ENCODE measurements at regions of chr4 and their contacts with region 1.

Region 1: GRCh38 chr4:140935254-140935653 is 179.1 kb upstream of the TBC1D9 start:
- DNase-seq: peak in 1 of 2 donors; percentile 50
- ATAC-seq: peak; percentile 43 to 85 (median 74)
- H3K4me3 ChIP-seq: no peak overlapping the region
- H3K27ac ChIP-seq: peak overlapping the region in 8 of 10 donors; percentile 1 to 66 (median 38)
- H3K4me1 ChIP-seq: peaks cover 0 to 61% (median 28%) of the 10 kb centered on the region in 9 donors
- H3K27me3 ChIP-seq: no peaks in the 10 kb centered on the region
- CTCF ChIP-seq: no peak

Region 2: DNA sequence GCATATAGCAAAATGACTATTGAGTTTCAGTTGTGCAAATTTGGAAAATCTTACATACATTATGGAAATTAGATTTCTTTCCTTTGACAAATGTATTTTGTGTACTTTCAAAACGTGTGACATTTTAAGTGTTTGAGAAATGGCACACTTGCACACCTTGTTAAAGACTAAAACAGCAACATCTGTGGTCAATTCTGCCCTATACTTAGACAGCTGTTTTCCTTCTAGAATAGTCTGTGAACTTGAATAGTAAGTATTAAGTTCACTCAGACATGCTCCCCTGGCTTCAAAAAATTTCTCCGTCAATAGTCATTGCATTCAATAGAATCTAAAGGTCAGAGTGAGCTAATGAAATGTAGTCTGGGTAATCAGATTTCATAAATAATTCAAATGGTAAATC is 157.4 kb before region 1 on chr4:
- intact Hi-C with region 1: no loop called
- DNase-seq: no peak
- ATAC-seq: no peak
- H3K4me3 ChIP-seq: no peak overlapping the region
- H3K27ac ChIP-seq: no peak overlapping the region
- H3K4me1 ChIP-seq: no peaks in the 10 kb centered on the region
- H3K27me3 ChIP-seq: no peaks in the 10 kb centered on the region
- CTCF ChIP-seq: no peak

Region 3: DNA sequence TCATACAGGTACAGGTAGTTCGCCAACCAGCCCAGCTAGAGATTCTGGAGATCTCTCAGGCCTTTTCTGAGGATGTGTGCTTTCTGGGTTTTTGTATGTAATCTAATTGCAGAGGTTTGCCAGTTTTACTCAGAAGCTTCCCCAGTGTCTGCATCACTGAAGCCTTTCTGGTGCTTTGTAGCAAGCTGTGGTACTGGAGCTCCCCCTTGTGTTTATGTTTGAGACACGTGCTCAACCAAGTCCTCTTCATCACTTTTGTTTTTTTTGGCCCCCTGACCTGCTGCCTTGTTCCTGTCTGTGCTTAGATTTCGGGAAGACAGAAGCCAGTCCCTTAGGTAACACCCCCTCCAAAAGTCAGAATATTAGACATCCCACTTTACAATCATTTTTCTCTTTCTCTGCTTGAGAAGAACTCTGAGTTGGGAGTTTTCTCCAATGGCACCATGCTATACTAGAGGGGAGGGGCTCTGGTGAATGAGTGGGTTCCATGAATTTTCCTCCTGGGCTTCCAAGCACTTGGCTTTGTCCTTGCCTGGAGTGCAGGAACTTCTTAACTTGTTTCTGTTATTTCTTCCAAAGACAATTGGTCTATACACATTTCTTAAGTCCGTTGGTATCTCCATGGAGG is 50.7 kb before region 1 on chr4:
- intact Hi-C with region 1: loop called in 1 of 10 experiments (anchors 5 kb)
- DNase-seq: peak in 1 of 2 donors; percentile 51
- ATAC-seq: peak; percentile 52 to 77 (median 70)
- H3K4me3 ChIP-seq: no peak overlapping the region
- H3K27ac ChIP-seq: peak overlapping the region in 1 of 10 donors; percentile 10
- H3K4me1 ChIP-seq: peaks cover 0 to 32% (median 4%) of the 10 kb centered on the region in 9 donors
- H3K27me3 ChIP-seq: no peaks in the 10 kb centered on the region
- CTCF ChIP-seq: peak; percentile 37 to 74 (median 69)

Region 4: GRCh38 chr4:140982613-140983340 is 47.5 kb after region 1 on chr4:
- intact Hi-C with region 1: loop called in 1 of 10 experiments (anchors 10 kb)
- DNase-seq: no peak
- ATAC-seq: peak in 7 of 8 donors; percentile 39 to 88 (median 79)
- H3K4me3 ChIP-seq: no peak overlapping the region
- H3K27ac ChIP-seq: peak overlapping the region in 6 of 10 donors; percentile 1 to 77 (median 56)
- H3K4me1 ChIP-seq: peaks cover 0 to 59% (median 12%) of the 10 kb centered on the region in 9 donors
- H3K27me3 ChIP-seq: no peaks in the 10 kb centered on the region
- CTCF ChIP-seq: peak in 1 of 9 donors; percentile 4

Region 5: GRCh38 chr4:140996766-140997165 is 61.5 kb after region 1 on chr4:
- intact Hi-C with region 1: loop called in 1 of 10 experiments (anchors 10 kb)
- DNase-seq: no peak
- ATAC-seq: no peak
- H3K4me3 ChIP-seq: no peak overlapping the region
- H3K27ac ChIP-seq: peak overlapping the region in 3 of 10 donors; percentile 13 to 65 (median 31)
- H3K4me1 ChIP-seq: peaks cover 2 to 62% (median 16%) of the 10 kb centered on the region in 9 donors
- H3K27me3 ChIP-seq: no peaks in the 10 kb centered on the region
- CTCF ChIP-seq: peak in 1 of 9 donors; percentile 36

Measured in heart right ventricle (tissue), 16 donors.